ENCODE measurements at regions of chr6 and their contacts with region 1.

Region 1: DNA sequence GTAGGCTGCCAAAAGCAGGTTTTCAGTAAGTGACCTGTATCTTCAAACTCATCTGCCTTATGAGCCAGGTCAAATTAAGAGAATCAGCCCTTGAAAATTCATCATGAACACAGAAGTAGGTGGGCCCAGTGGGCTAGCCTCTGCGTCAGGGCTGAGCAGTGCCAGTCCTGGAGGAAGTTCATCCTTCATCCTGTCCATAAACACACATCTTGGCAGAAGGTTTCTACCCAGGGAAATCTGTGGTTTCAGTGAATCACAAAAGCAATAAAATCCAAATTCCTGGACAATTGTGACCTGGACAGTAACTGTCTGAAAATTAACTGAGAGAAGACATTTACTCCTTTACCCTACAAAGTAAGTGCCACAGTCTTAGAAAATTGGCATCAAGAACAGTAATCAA is 72.4 kb downstream of the ATG5 start:
- DNase-seq: no peak
- H3K4me3 ChIP-seq: no peak overlapping the region
- H3K27ac ChIP-seq: no peak overlapping the region
- H3K27me3 ChIP-seq: no peaks in the 10 kb centered on the region
- CTCF ChIP-seq: no peak

Region 2: GRCh38 chr6:105844275-105844883 is 408.8 kb before region 1 on chr6:
- CTCF ChIA-PET with region 1: no interaction called
- POLR2A ChIA-PET with region 1: no interaction called
- DNase-seq: no peak
- H3K4me3 ChIP-seq: no peak overlapping the region
- H3K27ac ChIP-seq: no peak overlapping the region
- H3K27me3 ChIP-seq: no peaks in the 10 kb centered on the region
- CTCF ChIP-seq: no peak

Region 3: DNA sequence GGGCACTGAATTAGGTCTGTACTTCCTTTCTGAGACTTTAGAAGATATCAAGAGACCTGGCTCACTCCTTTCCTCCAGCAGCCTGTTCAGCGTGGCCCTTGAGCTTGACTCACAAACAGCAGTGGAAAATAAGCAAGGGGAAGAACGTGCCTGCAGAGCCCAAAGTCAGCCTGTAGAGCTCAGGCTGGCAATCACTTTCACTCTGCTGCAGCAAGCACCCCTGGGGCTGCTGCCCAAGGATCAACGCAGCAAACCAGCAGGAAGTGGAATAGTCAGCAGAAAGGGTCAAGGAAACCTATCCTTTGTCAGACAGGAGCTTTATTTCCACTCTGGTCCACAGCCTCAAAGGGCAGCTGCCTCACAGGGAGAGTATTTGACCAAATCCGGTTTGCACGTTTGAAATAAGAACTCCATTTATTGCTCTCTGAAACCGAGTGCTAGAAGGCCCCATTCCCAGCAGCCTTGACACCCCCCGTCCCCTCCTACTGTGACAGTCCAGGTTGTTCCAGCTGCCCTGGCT is 89.7 kb before region 1 on chr6:
- CTCF ChIA-PET with region 1: no interaction called
- POLR2A ChIA-PET with region 1: interaction called, 17 read pairs
- DNase-seq: peak; percentile 58
- H3K4me3 ChIP-seq: peak overlapping the region; percentile 27
- H3K27ac ChIP-seq: peak overlapping the region; percentile 90
- H3K27me3 ChIP-seq: no peaks in the 10 kb centered on the region
- CTCF ChIP-seq: peak; percentile 17; the same call in 1 of the 2 replicates

Measured in AG04450 (cell line).